H1 (cell line): ENCODE measurements at regions of chr19 and their contacts with region 1.

Region 1: GRCh38 chr19:45717166-45717982 is 13.3 kb downstream of the FBXO46 start:
- DNase-seq: peak; percentile 97 to 98
- H3K4me3 ChIP-seq: peak overlapping the region; percentile 83 to 92 (median 88)
- H3K27ac ChIP-seq: peak overlapping the region; percentile 96
- H3K4me1 ChIP-seq: peaks cover 0 to 9% (median 8%) of the 10 kb centered on the region in 4 experiments; a peak in 6 of 7 replicates
- H3K27me3 ChIP-seq: no peaks in the 10 kb centered on the region
- CTCF ChIP-seq: no peak
- EP300 ChIP-seq: peak in 1 of 2 experiments; percentile 56; a peak in 1 of 3 replicates
- POLR2A ChIP-seq: peak in 1 of 2 experiments; percentile 84; a peak in 2 of 3 replicates
- RAD21 ChIP-seq: no peak

Region 2: GRCh38 chr19:45705115-45705514 is 12.3 kb before region 1 on chr19:
- CTCF ChIA-PET with region 1: interaction called, 14 read pairs
- POLR2A ChIA-PET with region 1: interaction called, 90 read pairs
- DNase-seq: no peak
- H3K4me3 ChIP-seq: no peak overlapping the region
- H3K27ac ChIP-seq: no peak overlapping the region
- H3K4me1 ChIP-seq: no peaks in the 10 kb centered on the region
- H3K27me3 ChIP-seq: no peaks in the 10 kb centered on the region
- CTCF ChIP-seq: no peak
- EP300 ChIP-seq: no peak
- POLR2A ChIP-seq: no peak
- RAD21 ChIP-seq: no peak

Region 3: DNA sequence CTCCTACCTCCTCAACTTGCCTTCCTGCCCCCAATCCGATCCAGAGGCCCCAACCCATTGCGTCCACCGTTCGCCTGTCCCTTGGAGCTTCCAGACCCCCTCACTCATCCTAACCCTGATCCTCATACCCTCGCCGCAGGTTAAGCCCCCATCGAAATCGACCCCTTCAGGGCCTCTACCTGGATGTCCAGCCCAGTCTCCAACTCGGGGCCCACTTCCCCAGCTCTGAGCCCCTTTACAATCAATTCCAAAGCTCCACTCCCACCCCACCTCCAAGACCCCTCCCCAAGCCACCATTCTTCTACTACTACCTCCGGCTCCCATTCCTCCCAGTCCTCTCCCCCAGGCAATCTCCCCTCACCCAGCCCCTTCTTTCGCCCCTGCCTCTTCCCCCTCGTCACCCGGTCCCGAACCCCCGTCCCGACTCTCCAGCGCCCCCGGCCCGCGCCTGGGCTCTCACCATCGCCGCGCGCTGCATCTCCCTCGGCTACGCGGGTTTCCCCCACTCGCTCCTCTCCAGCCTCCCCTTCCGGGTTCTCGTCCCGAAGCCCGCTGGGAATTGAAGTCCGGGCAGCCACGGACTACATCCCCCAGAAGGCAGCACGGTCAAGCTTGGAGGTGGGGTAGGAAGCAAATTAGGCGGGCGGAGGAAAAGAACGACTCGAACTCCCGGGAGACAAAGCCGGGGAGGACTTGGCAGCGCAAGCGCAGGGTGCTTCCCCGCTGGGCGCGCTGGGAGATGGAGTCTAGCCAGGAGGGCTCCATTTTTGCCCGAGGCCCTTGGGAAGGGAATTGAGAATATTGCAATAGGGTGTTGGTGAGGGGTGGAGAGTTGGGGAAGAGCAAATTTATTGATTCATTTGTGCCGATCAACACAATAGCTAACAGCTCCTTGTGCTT is 13.3 kb after region 1 on chr19 and contains the start of gene FBXO46:
- CTCF ChIA-PET with region 1: interaction called, 9 read pairs
- POLR2A ChIA-PET with region 1: interaction called, 67 read pairs
- DNase-seq: peak; percentile 91 to 93
- H3K4me3 ChIP-seq: peak within 1 kb of the TSS; percentile 85 to 99 (median 90)
- H3K27ac ChIP-seq: peak within 1 kb of the TSS; percentile 44; the same call in 1 of the 2 replicates
- H3K4me1 ChIP-seq: peaks cover 0 to 4% (median 3%) of the 10 kb centered on the region in 4 experiments; a peak in 5 of 7 replicates
- H3K27me3 ChIP-seq: no peaks in the 10 kb centered on the region; a peak in 1 of 7 replicates
- CTCF ChIP-seq: peak in 1 of 3 experiments; percentile 21; a peak in 1 of 4 replicates
- EP300 ChIP-seq: no peak
- POLR2A ChIP-seq: peak; percentile 63 to 72
- RAD21 ChIP-seq: peak; percentile 4 to 11; a peak in 2 of 4 replicates
- total RNA-seq, gene FBXO46: 38.9 and 42.3 TPM in 2 replicates

Region 4: GRCh38 chr19:45824041-45824471 is 106.7 kb after region 1 on chr19:
- CTCF ChIA-PET with region 1: no interaction called
- POLR2A ChIA-PET with region 1: no interaction called
- DNase-seq: no peak
- H3K4me3 ChIP-seq: no peak overlapping the region
- H3K27ac ChIP-seq: no peak overlapping the region
- H3K4me1 ChIP-seq: no peaks in the 10 kb centered on the region; a peak in 1 of 7 replicates
- H3K27me3 ChIP-seq: no peaks in the 10 kb centered on the region
- CTCF ChIP-seq: no peak
- EP300 ChIP-seq: no peak
- POLR2A ChIP-seq: no peak
- RAD21 ChIP-seq: no peak